ENCODE measurements at regions of chr3 and their contacts with region 1.

Region 1: DNA sequence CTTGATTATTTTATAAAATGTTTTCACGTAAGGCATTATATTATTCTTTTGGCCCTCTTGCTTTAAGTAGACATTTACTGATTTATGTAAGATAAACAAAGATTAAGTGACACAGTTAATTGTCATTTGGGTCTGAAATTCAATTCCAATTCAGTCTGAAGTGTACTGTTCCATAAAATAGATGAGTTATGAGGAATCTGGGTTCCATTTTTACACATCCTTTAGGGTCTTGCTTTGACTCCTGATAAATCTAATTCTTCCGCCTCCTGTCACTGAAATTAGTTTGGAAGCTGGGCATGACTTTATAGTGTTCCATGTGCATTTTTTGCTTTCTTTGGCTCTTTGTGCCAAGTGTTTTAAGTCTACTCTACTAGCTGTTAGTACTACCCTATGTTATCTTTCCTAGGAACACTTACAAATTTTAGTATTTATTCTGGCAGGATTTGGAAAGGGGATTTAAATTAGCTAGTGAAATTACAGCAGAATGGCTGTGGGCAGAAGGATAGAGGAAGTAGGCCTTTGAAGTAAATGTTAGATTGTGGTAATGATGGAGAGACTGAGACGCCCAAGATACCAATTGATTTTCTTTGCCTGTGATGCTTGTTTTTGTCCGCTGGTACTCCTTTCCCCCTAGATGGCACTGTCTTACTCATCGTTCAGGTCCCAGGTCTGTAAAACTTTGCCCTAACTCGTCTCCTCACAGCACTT is 14.3 kb downstream of the ARL8B start:
- DNase-seq: peak; percentile 49 to 67 (median 62)
- H3K4me3 ChIP-seq: no peak overlapping the region
- H3K4me3 Mint-ChIP-seq: peak overlapping the region in 2 of 8 donors; percentile 0 to 51
- H3K27ac ChIP-seq: no peak overlapping the region
- H3K27ac Mint-ChIP-seq: peak overlapping the region; percentile 9 to 74 (median 47)
- H3K4me1 ChIP-seq: peaks cover 49% of the 10 kb centered on the region
- H3K4me1 Mint-ChIP-seq: peaks cover 47 to 73% (median 62%) of the 10 kb centered on the region in 4 donors
- H3K27me3 ChIP-seq: no peaks in the 10 kb centered on the region
- H3K27me3 Mint-ChIP-seq: no peaks in the 10 kb centered on the region

Region 2: GRCh38 chr3:4703054-4703480 is 433.3 kb before region 1 on chr3:
- CTCF ChIA-PET with region 1: no interaction called
- POLR2A ChIA-PET with region 1: no interaction called
- intact Hi-C with region 1: no loop called
- DNase-seq: no peak
- H3K4me3 ChIP-seq: no peak overlapping the region
- H3K4me3 Mint-ChIP-seq: no peak overlapping the region
- H3K27ac ChIP-seq: no peak overlapping the region
- H3K27ac Mint-ChIP-seq: peak overlapping the region in 2 of 7 donors; percentile 27 to 48
- H3K4me1 ChIP-seq: no peaks in the 10 kb centered on the region
- H3K4me1 Mint-ChIP-seq: no peaks in the 10 kb centered on the region
- H3K27me3 ChIP-seq: no peaks in the 10 kb centered on the region
- H3K27me3 Mint-ChIP-seq: no peaks in the 10 kb centered on the region

Region 3: DNA sequence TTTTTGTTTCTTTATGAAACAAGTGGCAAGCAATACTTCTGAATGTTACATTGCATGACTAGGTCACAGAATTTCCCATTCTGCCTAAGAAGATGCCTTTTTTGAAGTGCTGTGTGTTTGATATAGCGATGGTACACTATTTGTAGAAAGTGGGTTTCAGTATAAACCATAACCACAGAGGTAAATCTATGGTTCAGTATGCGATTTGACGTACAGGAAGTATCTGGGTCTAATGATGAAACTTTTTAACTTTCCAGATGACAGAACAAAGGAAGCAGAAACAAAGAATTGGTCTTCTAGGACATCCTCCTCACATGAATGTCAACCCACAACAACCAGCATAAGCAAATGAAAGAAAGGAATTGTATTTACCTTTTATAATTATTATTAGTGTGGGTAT is 290.5 kb before region 1 on chr3:
- CTCF ChIA-PET with region 1: no interaction called
- POLR2A ChIA-PET with region 1: no interaction called
- intact Hi-C with region 1: no loop called
- DNase-seq: peak in 4 of 5 donors; percentile 73 to 84 (median 76)
- H3K4me3 ChIP-seq: peak overlapping the region in 1 of 2 donors; percentile 27
- H3K4me3 Mint-ChIP-seq: peak overlapping the region in 7 of 8 donors; percentile 5 to 62 (median 35)
- H3K27ac ChIP-seq: peak overlapping the region; percentile 67
- H3K27ac Mint-ChIP-seq: peak overlapping the region; percentile 50 to 98 (median 94)
- H3K4me1 ChIP-seq: peaks cover 96% of the 10 kb centered on the region
- H3K4me1 Mint-ChIP-seq: peaks cover 70 to 93% (median 83%) of the 10 kb centered on the region in 4 donors
- H3K27me3 ChIP-seq: no peaks in the 10 kb centered on the region
- H3K27me3 Mint-ChIP-seq: no peaks in the 10 kb centered on the region

Region 4: GRCh38 chr3:5187156-5187919 is 51.0 kb after region 1 on chr3 and contains the start of gene EDEM1:
- CTCF ChIA-PET with region 1: interaction called, 7 read pairs
- POLR2A ChIA-PET with region 1: interaction called, 4 read pairs
- intact Hi-C with region 1: loop called (anchors 5 kb)
- DNase-seq: peak; percentile 92 to 94 (median 93)
- H3K4me3 ChIP-seq: peak within 1 kb of the TSS; percentile 80 to 85
- H3K4me3 Mint-ChIP-seq: peak within 1 kb of the TSS; percentile 93 to 100 (median 98)
- H3K27ac ChIP-seq: peak within 1 kb of the TSS; percentile 87
- H3K27ac Mint-ChIP-seq: peak within 1 kb of the TSS; percentile 98 to 99 (median 99)
- H3K4me1 ChIP-seq: peaks cover 16% of the 10 kb centered on the region
- H3K4me1 Mint-ChIP-seq: peaks cover 26 to 46% (median 32%) of the 10 kb centered on the region in 4 donors
- H3K27me3 ChIP-seq: no peaks in the 10 kb centered on the region
- H3K27me3 Mint-ChIP-seq: no peaks in the 10 kb centered on the region
- total RNA-seq, gene EDEM1: 146 to 153 TPM

Region 5: GRCh38 chr3:5226783-5227182 is 90.4 kb after region 1 on chr3:
- CTCF ChIA-PET with region 1: interaction called, 24 read pairs
- POLR2A ChIA-PET with region 1: no interaction called
- intact Hi-C with region 1: loop called (anchors 2 kb)
- DNase-seq: peak in 1 of 5 donors; percentile 5
- H3K4me3 ChIP-seq: no peak overlapping the region
- H3K4me3 Mint-ChIP-seq: no peak overlapping the region
- H3K27ac ChIP-seq: no peak overlapping the region
- H3K27ac Mint-ChIP-seq: no peak overlapping the region
- H3K4me1 ChIP-seq: no peaks in the 10 kb centered on the region
- H3K4me1 Mint-ChIP-seq: peaks cover 0 to 2% (median 0%) of the 10 kb centered on the region in 4 donors
- H3K27me3 ChIP-seq: no peaks in the 10 kb centered on the region
- H3K27me3 Mint-ChIP-seq: no peaks in the 10 kb centered on the region

Region 6: DNA sequence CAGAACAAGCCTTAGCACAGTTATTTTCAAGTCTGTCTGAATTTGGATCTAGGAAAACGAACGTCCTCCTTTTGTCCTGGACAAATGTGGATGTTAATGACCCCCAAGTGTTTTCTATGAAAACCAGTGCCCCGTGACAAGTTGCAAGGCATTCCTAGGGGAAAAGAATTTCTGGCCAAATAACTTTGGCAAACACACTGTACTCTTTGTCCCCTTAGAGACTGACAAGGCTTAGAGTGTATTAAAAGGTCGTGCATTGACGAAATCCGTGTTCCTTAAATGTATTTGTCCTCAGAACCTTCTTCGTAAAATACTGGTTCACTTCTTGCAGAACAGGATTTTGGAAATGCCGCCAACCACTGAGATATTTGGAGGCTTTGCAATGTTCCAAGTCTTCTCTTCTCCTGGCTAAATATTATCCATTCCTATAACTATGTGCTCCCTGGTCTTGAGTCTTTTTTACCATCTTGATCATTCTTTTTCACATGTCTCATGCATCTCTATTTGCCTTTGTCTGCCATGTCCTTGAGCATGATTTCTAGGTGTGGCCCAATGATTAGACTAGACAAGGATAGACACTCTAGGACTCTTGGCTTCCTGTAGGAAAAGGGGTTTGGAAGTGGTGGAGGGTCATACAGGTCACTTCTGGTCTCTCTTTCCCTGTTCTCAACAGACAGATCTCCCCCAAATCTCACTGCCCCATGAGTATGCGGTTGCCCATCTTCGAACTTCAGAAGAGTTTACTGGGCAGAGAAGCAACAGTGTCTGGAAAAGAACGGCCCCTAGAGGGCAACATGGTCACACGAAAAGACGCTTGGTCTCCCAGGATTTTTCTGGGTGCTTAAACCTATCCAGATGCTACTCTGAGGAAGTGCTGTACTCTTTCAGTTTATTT is 168.7 kb after region 1 on chr3:
- CTCF ChIA-PET with region 1: interaction called, 5 read pairs
- POLR2A ChIA-PET with region 1: no interaction called
- intact Hi-C with region 1: loop called (anchors 1 kb)
- DNase-seq: peak in 4 of 5 donors; percentile 1 to 11 (median 3)
- H3K4me3 ChIP-seq: no peak overlapping the region
- H3K4me3 Mint-ChIP-seq: no peak overlapping the region
- H3K27ac ChIP-seq: no peak overlapping the region
- H3K27ac Mint-ChIP-seq: no peak overlapping the region
- H3K4me1 ChIP-seq: no peaks in the 10 kb centered on the region
- H3K4me1 Mint-ChIP-seq: no peaks in the 10 kb centered on the region
- H3K27me3 ChIP-seq: no peaks in the 10 kb centered on the region
- H3K27me3 Mint-ChIP-seq: peaks cover 1 to 2% of the 10 kb centered on the region in 2 donors